GM10248 (cell line): ENCODE measurements at regions of chr6 and their contacts with region 1.

Region 1: GRCh38 chr6:136226027-136226673 is 24.0 kb downstream of the MTFR2 start:
- DNase-seq: peak; percentile 57
- CTCF ChIP-seq: peak; percentile 95

Region 2: GRCh38 chr6:135451693-135452092 is 774.5 kb before region 1 on chr6:
- CTCF ChIA-PET with region 1: interaction called, 24 read pairs
- POLR2A ChIA-PET with region 1: no interaction called
- DNase-seq: no peak
- CTCF ChIP-seq: peak; percentile 62

Region 3: GRCh38 chr6:135506270-135506997 is 719.7 kb before region 1 on chr6:
- CTCF ChIA-PET with region 1: interaction called, 17 read pairs
- POLR2A ChIA-PET with region 1: no interaction called
- DNase-seq: peak; percentile 19
- CTCF ChIP-seq: peak; percentile 54

Region 4: GRCh38 chr6:136210398-136211165 is 15.6 kb before region 1 on chr6:
- CTCF ChIA-PET with region 1: interaction called, 29 read pairs
- POLR2A ChIA-PET with region 1: no interaction called
- DNase-seq: no peak
- CTCF ChIP-seq: no peak

Region 5: GRCh38 chr6:136249811-136250685 is 23.9 kb after region 1 on chr6 and contains the start of gene MTFR2:
- CTCF ChIA-PET with region 1: interaction called, 14 read pairs
- POLR2A ChIA-PET with region 1: no interaction called
- DNase-seq: peak; percentile 96
- CTCF ChIP-seq: no peak

Region 6: DNA sequence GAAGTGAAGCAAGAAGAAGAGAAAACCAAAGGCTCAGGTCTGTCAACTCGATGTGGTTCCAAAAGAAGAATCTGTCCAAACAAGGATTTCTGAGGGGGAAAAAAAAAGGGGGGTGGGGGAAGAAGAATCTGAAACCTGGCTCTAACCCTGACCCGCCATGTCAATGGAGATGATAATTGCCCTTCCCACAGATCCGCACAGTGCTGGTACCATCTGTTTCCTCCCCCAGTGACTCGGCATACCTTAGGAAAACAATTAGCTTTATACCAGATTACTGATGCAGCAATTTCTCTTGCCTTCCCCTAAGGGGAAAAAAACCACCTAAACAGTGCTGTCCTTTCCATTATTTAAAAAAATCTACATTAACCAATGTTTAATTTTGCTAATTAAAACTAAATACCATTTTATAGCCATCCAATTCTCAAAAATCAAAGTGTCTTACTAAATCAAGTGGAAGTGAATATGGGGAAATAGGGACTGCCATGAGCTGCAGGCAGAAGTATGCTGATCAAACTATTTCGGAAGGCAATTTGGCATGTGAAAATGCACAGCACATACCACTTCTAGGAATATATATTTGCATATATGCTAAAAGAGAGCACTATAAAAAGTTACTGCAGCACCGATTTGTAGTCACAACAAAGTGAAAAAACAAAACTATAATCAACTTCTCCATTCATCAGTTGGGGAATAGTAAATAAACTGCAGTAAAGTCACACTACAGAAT is 277.3 kb after region 1 on chr6:
- CTCF ChIA-PET with region 1: no interaction called
- POLR2A ChIA-PET with region 1: no interaction called
- DNase-seq: no peak
- CTCF ChIP-seq: no peak

Region 7: DNA sequence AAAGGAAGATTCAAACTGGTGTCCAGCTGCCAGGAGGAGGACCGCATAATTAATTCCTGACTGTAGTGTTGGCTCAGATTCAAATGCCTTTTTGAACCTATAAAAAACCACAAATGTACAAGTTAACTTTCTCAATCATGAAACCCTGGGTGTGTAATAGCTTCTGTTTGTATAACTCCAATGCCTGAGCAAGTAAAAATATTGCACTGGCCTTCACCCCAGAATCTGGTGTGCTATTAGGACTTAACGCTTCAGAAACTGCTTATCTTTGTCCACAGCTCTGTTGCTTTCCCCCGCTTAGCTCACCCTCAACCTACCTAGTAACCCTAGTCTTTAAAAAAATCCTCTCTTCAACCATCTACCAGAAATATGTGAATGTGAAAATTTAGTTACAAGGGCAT is 443.1 kb after region 1 on chr6:
- CTCF ChIA-PET with region 1: no interaction called
- POLR2A ChIA-PET with region 1: no interaction called
- DNase-seq: no peak
- CTCF ChIP-seq: no peak